PC-3 (cell line): ENCODE measurements at regions of chr22 and their contacts with region 1.

Region 1: DNA sequence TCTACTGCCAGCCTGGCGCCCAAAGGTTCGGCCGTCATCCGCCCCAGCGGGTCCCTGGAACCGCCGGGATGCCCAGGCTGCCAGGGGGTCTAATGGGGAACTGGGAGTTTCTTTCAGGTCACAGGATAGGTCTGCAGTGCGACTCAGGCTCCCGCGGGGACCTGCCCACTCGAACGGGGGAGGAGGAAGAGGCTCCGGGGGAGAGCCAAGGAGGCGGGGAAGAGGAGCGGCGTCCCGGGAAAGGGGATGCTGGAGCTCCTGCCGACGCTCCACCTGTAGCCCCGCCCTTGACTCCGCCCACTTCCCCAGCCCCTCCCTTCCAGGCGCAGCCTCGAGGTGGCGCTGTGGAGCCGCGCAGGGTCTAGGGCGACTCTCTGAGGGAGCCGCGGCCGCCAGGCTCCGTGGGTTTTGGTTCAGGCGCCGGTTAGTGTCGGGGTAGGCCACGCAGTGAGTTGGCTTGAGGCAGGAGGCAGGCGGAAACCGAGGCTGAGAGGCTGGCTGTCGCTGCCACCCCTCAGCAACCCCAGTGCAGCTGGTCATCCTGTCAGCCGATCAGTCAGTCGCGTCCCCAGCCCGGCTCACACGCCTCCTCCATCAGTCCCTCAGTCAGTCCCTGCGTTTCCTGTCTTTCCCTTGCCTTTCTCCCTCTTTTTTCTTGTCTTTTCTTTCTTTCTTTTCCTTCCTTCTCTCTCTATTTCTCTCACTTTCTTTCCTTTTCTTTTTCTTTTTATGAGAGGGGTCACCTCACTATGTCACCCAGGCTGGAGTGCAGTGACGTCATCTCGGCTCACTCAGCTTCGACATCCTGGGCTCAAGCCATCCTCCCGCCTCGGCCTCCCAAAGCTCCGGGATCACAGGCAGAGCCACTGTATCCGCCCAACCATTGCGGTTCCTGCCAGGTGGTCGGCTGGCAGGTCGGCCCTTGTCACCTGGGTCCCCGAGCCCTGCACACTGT is 26.4 kb downstream of the YWHAH start:
- DNase-seq: peak; percentile 86
- ATAC-seq: peak; percentile 82
- H3K4me3 ChIP-seq: peak overlapping the region; percentile 69
- H3K27ac ChIP-seq: no peak overlapping the region
- H3K4me1 ChIP-seq: peaks cover 8% of the 10 kb centered on the region; the same call in 1 of the 2 replicates
- H3K27me3 ChIP-seq: no peaks in the 10 kb centered on the region
- CTCF ChIP-seq: peak; percentile 65

Region 2: GRCh38 chr22:31754813-31755212 is 216.0 kb before region 1 on chr22:
- CTCF ChIA-PET with region 1: interaction called, 10 read pairs
- POLR2A ChIA-PET with region 1: no interaction called
- intact Hi-C with region 1: no loop called
- DNase-seq: no peak
- ATAC-seq: no peak
- H3K4me3 ChIP-seq: peak overlapping the region; percentile 97
- H3K27ac ChIP-seq: no peak overlapping the region
- H3K4me1 ChIP-seq: peaks cover 19% of the 10 kb centered on the region
- H3K27me3 ChIP-seq: no peaks in the 10 kb centered on the region
- CTCF ChIP-seq: no peak

Region 3: DNA sequence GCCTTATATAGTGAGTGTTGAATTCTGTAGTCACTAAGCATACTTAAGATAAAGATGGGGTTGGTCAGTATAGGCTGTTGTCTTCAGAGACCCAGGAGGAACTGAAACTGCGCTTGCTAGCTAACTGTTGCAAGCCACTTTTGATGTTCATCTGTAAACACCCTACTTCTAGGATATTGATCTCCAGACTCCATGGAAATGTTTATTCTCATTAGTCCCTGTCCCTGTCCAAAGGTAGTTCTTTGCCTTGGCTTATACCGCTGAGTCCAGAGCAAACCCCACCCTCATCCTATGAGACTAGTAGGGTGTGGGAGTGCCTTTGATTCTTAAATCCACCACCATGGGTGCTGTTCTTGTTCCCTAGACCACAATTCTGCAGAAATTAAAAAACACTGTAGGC is 180.5 kb before region 1 on chr22:
- CTCF ChIA-PET with region 1: no interaction called
- POLR2A ChIA-PET with region 1: no interaction called
- intact Hi-C with region 1: no loop called
- DNase-seq: no peak
- ATAC-seq: no peak
- H3K4me3 ChIP-seq: no peak overlapping the region
- H3K27ac ChIP-seq: no peak overlapping the region
- H3K4me1 ChIP-seq: no peaks in the 10 kb centered on the region
- H3K27me3 ChIP-seq: no peaks in the 10 kb centered on the region
- CTCF ChIP-seq: no peak

Region 4: DNA sequence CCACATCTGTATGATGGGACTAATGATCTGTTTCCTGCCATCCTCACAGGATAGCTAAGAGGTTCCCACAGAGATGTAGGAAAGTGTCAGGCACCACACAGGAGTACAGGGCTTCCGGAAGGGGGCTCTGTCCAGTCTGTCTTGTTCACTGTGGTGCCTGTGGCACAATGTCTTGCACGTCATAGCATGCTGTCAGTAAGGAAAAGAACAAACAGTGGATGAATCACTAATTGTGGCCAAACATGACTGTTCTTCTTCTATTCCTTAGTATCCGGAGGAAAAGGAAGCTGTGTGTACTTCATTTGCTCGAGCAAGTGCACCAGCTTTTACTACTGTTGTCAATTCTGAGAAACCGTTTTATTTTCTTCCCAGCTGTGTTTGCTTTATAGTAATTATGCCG is 99.9 kb before region 1 on chr22:
- CTCF ChIA-PET with region 1: interaction called, 14 read pairs
- POLR2A ChIA-PET with region 1: no interaction called
- intact Hi-C with region 1: no loop called
- DNase-seq: peak; percentile 91
- ATAC-seq: peak; percentile 97
- H3K4me3 ChIP-seq: no peak overlapping the region
- H3K27ac ChIP-seq: peak overlapping the region; percentile 94
- H3K4me1 ChIP-seq: peaks cover 38% of the 10 kb centered on the region
- H3K27me3 ChIP-seq: no peaks in the 10 kb centered on the region
- CTCF ChIP-seq: peak; percentile 57

Region 5: GRCh38 chr22:31945971-31946680 is 24.6 kb before region 1 on chr22:
- CTCF ChIA-PET with region 1: no interaction called
- POLR2A ChIA-PET with region 1: no interaction called
- intact Hi-C with region 1: no loop called
- DNase-seq: no peak
- ATAC-seq: no peak
- H3K4me3 ChIP-seq: peak overlapping the region; percentile 100
- H3K27ac ChIP-seq: peak overlapping the region; percentile 80
- H3K4me1 ChIP-seq: peaks cover 32% of the 10 kb centered on the region
- H3K27me3 ChIP-seq: no peaks in the 10 kb centered on the region
- CTCF ChIP-seq: no peak

Region 6: DNA sequence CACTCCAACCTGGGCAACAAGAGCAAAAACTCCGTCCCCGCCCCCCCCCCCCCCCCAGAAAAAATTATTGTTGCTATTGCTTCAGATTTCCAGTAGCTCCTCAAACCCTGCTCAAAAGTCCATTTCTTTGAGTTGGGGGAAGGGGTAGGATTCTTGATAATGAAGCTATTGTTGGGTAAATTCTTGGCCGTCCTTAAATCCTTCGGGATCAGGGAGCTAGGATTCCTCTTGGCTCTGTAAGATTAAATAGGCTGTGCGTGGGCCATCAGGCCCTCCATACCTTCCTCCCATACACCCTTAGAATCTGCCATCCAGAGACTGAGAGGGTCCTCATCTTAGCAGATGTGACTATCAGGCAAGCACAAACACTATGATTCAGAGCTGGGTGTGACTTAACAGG is 10.0 kb before region 1 on chr22:
- CTCF ChIA-PET with region 1: no interaction called
- POLR2A ChIA-PET with region 1: interaction called, 12 read pairs
- intact Hi-C with region 1: no loop called
- DNase-seq: no peak
- ATAC-seq: no peak
- H3K4me3 ChIP-seq: no peak overlapping the region
- H3K27ac ChIP-seq: no peak overlapping the region
- H3K4me1 ChIP-seq: no peaks in the 10 kb centered on the region
- H3K27me3 ChIP-seq: no peaks in the 10 kb centered on the region
- CTCF ChIP-seq: no peak